ENCODE measurements at regions of chrX and their contacts with region 1.

Region 1: DNA sequence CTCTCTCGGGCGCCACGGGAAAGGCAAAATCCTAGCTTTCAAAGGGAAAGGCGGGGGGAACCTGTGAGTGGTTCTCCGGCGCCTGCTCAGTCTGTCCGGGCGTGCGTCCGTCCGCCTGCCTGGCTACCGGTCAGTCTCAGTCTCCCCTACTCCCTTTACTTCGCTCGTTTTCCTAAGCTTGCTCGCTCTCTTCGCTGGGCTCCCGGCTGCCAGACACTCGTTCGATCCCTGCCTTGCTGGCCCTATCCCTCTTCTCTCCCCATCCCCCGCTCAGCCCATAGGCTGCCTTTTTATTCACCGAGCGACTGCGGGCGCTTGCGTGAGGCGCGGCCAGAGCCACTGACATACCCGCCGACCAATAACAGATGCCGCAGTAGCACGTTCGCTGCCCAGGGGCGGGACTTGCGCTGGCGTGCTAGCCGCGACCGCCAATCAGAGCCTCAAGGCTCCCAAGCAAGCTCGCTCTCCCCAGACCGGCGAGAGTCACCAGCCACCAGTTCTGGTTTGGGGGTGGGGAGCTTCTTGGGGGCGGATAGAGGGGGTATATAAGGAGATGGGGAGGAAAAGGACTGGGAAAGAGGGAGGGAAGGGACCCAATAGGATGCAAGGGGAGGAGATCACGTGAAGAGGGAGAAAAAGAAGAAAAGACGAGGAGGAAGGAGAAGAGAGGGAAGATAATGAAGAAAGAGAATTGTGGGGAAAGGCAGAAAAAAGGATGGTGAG is 30.0 kb downstream of the ARHGEF9 start:
- DNase-seq: peak; percentile 95 to 96
- ATAC-seq: peak; percentile 94
- H3K4me3 ChIP-seq: peak overlapping the region; percentile 79 to 87
- H3K27ac ChIP-seq: peak overlapping the region; percentile 78 to 96
- H3K4me1 ChIP-seq: peaks cover 0 to 1% of the 10 kb centered on the region in 2 donors
- H3K27me3 ChIP-seq: no peaks in the 10 kb centered on the region

Region 2: DNA sequence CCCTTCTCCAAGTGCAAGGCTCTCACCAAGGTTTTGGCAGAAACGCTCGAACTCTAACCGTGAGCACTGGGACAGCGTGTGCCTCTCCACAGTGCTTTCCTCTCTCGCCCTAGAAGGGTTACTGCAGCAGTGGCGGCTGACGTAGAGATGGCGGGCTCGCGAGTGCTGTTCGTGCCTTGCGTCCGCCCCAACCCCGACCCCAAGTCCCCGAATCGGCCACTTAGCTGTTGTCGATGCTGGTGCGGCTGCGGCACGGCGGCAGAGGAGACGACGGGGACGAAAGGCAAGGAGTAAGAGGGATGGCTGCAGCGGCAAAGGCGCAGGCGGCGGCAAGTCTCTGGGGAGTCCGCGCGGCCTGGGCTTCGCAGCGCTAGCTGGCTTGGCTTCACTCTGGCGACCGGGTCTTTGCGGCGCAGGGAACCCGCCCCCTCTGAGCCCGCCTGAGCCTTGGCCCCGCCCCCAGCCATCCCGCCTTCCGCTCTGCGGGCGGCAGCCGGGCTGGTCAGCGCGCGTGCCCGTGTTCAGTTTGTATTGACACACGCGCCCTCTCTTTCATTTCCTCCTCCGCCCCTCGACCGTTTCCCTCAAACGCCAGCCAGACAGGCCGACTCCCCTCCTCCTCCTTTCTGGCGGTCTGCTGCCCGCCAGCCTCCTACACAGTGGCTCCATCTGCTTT is 403.9 kb before region 1 on chrX and contains the start of gene SPIN4:
- intact Hi-C with region 1: loop called in 1 of 2 experiments (anchors 5 kb)
- DNase-seq: peak; percentile 93 to 95
- ATAC-seq: peak; percentile 96
- H3K4me3 ChIP-seq: peak within 1 kb of the TSS; percentile 49 to 60
- H3K27ac ChIP-seq: peak within 1 kb of the TSS in 1 of 2 donors; percentile 80
- H3K4me1 ChIP-seq: no peaks in the 10 kb centered on the region
- H3K27me3 ChIP-seq: no peaks in the 10 kb centered on the region
- total RNA-seq, gene SPIN4: 9.8 to 12.3 TPM

Region 3: DNA sequence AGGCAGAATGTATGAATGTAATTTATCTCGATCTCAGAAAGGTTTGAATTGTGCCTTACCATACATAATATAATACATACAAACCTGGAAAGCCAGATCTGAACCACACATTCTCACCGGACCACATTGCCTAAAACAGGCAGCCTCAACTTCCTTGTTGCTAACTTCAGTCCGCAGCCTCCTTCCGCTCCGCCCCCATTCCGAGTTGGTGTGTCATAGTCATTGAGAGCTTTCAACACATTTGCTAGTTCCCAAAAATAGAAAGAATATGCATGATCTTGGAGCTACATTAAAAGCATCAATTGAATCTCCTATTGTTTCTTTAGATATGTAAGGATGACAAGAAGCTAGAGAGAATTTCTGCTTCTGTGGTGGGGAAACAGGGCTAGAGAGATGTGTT is 97.2 kb before region 1 on chrX:
- intact Hi-C with region 1: loop called in 1 of 2 experiments (anchors 10 kb)
- DNase-seq: peak; percentile 87 to 93
- ATAC-seq: peak; percentile 74
- H3K4me3 ChIP-seq: no peak overlapping the region
- H3K27ac ChIP-seq: peak overlapping the region; percentile 64 to 83
- H3K4me1 ChIP-seq: no peaks in the 10 kb centered on the region
- H3K27me3 ChIP-seq: no peaks in the 10 kb centered on the region

Region 4: GRCh38 chrX:64205735-64206491 is 450.9 kb after region 1 on chrX:
- intact Hi-C with region 1: loop called in 1 of 2 experiments (anchors 10 kb)
- DNase-seq: peak; percentile 95 to 96
- ATAC-seq: peak; percentile 94
- H3K4me3 ChIP-seq: peak overlapping the region; percentile 33 to 74
- H3K27ac ChIP-seq: peak overlapping the region; percentile 18 to 85
- H3K4me1 ChIP-seq: no peaks in the 10 kb centered on the region
- H3K27me3 ChIP-seq: no peaks in the 10 kb centered on the region

Measured in aorta (tissue), 5 donors.